ENCODE measurements at regions of chr14 and their contacts with region 1.

Region 1: DNA sequence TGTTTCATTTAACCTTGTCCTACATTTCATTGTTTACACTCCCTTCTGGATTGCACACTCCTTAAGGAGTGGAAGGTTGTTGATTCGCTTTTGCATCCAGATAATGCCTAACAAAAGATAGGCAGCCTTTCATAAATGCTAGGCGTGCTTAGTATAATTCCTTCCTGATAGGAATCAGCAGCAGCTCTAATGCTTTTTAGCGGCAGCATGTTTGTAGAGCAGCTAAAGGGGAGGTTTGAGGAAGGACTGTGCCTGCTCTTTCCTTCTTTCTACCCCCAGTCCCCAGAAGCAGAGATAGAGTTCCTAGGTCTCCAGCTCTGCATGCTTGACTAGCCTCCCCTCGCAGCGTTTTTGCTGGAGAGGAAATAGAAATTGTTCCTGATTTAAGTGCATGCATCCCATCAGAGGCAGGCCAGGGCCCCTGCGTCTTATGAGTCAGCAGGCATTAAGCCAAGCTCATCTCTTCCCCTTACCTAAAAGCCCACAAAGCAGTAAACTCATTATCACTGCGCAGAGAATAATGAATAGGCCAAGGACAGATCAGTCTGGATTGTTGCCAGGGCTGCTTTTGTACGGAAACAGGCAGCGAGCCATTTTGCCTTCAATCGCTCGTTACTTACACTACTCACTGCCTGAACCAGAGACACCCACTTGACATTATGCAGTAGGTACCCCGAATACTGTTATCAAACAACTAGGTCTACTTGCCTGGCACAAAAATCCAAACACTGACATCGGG is 14.0 kb upstream of the TBPL2 start:
- DNase-seq: peak; percentile 48
- ATAC-seq: peak; percentile 77 to 87

Region 2: GRCh38 chr14:55327179-55327578 is 127.3 kb before region 1 on chr14:
- intact Hi-C with region 1: no loop called
- DNase-seq: no peak
- ATAC-seq: no peak

Region 3: GRCh38 chr14:55546212-55546874 is 91.9 kb after region 1 on chr14:
- intact Hi-C with region 1: loop called in 1 of 2 experiments (anchors 10 kb)
- DNase-seq: no peak
- ATAC-seq: no peak

Measured in left cardiac atrium (tissue), 4 donors.